Head of caudate nucleus (tissue), 42 donors: ENCODE measurements at regions of chr2 and their contacts with region 1.

Region 1: DNA sequence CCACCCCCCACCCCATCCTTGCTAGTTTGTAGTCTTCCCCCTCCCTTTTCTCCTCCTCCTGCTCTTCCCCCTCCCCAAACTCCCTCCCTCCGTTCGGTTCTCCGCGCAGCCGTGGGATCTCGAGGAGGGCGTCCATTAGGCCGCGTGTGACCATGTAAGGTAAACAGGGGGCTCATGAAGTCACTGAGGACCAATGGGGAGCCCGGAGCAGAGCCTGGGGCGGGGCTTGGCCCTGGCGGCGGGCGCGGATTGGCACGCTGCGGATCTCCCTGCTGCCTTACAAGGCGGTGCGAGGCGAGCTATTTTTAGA is 246 bp upstream of the KLF7 start:
- DNase-seq: peak; percentile 98 to 100 (median 100)

Region 2: GRCh38 chr2:206981739-206982340 is 184.2 kb before region 1 on chr2:
- intact Hi-C with region 1: loop called (anchors 5 kb)
- DNase-seq: peak; percentile 76 to 95 (median 90)

Region 3: DNA sequence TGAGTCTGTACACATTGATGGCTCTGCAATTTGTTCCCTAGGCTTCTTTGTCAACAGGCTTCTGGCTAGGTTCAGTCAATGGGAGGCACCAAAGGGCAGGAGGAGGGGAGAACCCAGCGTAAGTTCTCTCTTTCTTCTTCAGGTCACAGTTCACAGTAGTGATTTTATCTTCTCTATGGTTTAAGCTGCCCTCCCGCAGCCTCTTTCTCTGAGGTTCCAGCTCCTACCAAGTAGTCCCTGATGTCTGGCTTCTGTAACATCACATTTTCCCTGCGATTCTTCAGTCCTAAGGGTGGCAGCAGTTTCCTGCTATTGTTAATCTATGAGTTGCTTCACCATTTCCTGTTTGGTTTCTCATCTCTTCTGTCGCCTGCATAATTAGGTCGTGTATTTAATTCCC is 119.3 kb before region 1 on chr2:
- intact Hi-C with region 1: loop called (anchors 10 kb)
- DNase-seq: peak in 15 of 42 donors; percentile 15 to 70 (median 36)

Region 4: DNA sequence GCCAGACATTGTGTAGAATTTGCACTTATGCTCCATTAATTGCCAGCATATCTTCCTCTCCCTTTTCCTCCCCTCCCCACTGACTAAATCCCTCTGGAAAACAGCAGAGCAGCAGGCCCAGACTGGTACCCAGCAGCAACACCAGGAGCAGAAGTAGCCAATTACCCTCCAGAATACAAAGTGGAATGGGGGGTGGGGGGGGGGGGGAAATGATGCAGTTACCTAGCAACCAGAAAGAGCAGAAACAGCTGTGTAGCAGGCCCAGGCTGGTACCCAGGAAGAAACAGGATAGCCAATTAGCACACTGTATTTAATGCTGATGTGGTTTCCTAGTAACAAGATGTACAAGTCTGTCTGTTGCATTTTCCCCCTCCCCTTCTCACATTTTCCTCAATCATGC is 52.6 kb before region 1 on chr2:
- intact Hi-C with region 1: loop called (anchors 5 kb)
- DNase-seq: peak in 40 of 42 donors; percentile 13 to 81 (median 62)

Region 5: GRCh38 chr2:207227062-207227748 is 61.2 kb after region 1 on chr2:
- intact Hi-C with region 1: loop called (anchors 5 kb)
- DNase-seq: peak; percentile 48 to 90 (median 73)

Region 6: GRCh38 chr2:207394812-207395534 is 229.0 kb after region 1 on chr2:
- intact Hi-C with region 1: no loop called
- DNase-seq: no peak

Region 7: GRCh38 chr2:207473049-207473930 is 307.3 kb after region 1 on chr2:
- intact Hi-C with region 1: loop called (anchors 5 kb)
- DNase-seq: peak; percentile 18 to 90 (median 74)